OCI-LY7 (cell line): ENCODE measurements at regions of chr6 and their contacts with region 1.

Region 1: DNA sequence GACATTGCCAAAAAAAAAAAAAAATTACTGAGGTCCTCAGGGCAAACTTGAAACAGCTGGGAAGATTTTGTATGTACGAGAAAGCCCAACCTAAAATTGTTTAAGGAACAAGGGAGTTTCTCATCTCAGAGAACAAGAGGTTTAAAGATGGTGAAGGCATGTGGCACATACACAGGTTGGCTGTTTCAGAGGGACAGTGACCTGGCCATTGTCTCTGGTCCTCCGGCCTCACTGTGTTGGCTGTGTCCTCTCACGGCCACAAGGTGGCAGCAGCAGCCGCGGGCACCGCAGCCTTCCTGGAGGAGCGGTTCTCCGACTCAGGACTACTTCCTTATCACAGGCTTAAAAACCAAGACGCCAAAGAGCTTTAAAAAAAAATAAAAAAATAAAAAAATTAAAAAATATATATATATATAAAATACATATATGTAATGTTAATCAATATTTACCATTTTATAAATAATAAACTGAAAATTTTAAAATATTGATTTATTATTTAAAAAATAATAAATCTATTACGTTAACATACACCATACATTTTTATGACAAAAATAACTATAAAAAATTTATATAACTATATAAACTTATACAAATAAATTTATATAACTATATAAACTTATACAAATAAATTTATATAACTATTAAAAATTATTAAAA is 52.8 kb downstream of the GTF2H5 start:
- DNase-seq: peak; percentile 81
- H3K4me3 ChIP-seq: no peak overlapping the region
- H3K27ac ChIP-seq: no peak overlapping the region
- H3K4me1 ChIP-seq: no peaks in the 10 kb centered on the region
- CTCF ChIP-seq: peak; percentile 90

Region 2: GRCh38 chr6:157912326-157912725 is 308.6 kb before region 1 on chr6:
- CTCF ChIA-PET with region 1: no interaction called
- POLR2A ChIA-PET with region 1: no interaction called
- intact Hi-C with region 1: no loop called
- DNase-seq: no peak
- H3K4me3 ChIP-seq: no peak overlapping the region
- H3K27ac ChIP-seq: no peak overlapping the region
- H3K4me1 ChIP-seq: peaks cover 8% of the 10 kb centered on the region
- CTCF ChIP-seq: no peak

Region 3: DNA sequence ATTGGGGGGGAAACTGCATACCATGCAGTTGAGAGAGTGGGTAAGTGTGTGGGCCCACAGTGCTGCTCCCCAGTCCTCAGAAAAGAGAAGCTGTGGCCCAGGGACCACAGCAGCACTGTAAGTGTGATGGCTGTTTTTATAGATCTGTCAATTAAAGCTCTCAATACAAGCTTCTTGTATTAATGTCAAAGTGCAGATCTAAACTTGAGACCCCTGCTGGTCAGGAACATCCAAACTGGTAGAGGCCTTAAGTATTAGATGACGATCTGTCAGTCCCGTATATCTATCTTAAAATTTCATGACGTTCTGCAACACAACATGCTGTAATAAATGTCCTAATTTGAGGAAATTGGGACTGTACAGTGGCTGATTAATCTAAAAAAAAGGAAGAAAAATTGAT is 166.1 kb after region 1 on chr6:
- CTCF ChIA-PET with region 1: interaction called, 7 read pairs
- POLR2A ChIA-PET with region 1: interaction called, 5 read pairs
- intact Hi-C with region 1: loop called (anchors 2 kb)
- DNase-seq: peak; percentile 56
- H3K4me3 ChIP-seq: no peak overlapping the region
- H3K27ac ChIP-seq: no peak overlapping the region
- H3K4me1 ChIP-seq: no peaks in the 10 kb centered on the region
- CTCF ChIP-seq: peak; percentile 76

Region 4: DNA sequence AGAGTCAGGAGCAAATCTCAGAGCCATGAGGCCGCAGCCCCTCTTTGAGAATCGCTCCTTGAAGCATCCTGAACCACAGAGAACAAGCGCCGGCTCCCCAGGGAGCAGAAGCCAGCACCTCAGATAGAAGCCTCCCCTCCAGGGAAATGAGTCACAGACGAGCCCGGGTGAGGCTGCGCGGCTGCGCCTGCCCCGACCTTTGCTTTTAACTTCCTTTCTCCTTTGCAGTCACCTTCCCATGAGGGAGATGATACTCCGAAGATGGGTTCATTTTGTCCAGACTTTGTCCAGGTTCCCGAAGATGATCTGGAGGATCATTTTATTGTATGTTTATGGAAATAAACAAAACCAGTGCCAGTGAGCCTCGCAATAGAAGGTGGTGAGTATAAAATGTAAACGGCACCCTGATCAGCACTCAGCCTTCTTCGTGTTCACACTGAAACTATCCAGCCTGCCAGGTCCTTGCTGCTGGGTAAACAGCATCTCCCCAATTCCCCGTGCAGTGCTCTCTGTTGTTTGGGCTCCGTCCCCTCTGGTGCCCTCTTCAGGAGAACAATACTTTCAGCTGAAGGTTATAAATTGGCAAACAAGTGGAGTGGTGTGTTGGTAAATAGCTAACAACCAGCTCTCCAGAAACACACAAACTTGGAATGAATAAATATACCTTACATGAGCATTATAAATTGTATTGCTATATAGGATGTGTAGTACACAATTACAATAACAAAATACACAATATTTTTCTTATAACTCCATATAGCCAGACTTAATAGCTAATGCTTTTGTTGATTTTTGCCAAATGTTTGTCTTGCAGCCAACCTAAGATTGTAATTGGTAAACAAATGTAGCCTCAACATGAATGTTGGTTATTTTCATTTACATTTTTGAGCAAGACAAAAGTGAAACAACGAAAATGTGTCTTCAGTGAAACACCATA is 297.5 kb after region 1 on chr6:
- CTCF ChIA-PET with region 1: no interaction called
- POLR2A ChIA-PET with region 1: interaction called, 3 read pairs
- intact Hi-C with region 1: loop called (anchors 1 kb)
- DNase-seq: peak; percentile 87
- H3K4me3 ChIP-seq: peak overlapping the region; percentile 57
- H3K27ac ChIP-seq: no peak overlapping the region
- H3K4me1 ChIP-seq: peaks cover 10% of the 10 kb centered on the region
- CTCF ChIP-seq: peak; percentile 92

Region 5: GRCh38 chr6:158605266-158605878 is 384.5 kb after region 1 on chr6:
- CTCF ChIA-PET with region 1: interaction called, 3 read pairs
- POLR2A ChIA-PET with region 1: no interaction called
- intact Hi-C with region 1: loop called (anchors 1 kb)
- DNase-seq: peak; percentile 67
- H3K4me3 ChIP-seq: no peak overlapping the region
- H3K27ac ChIP-seq: no peak overlapping the region
- H3K4me1 ChIP-seq: no peaks in the 10 kb centered on the region
- CTCF ChIP-seq: peak; percentile 85